Endothelial cell of umbilical vein (primary cell): ENCODE measurements at regions of chr15 and their contacts with region 1.

Region 1: GRCh38 chr15:71448688-71449114 is 333.4 kb downstream of the THSD4 start:
- DNase-seq: peak; percentile 87
- H3K4me3 ChIP-seq: no peak overlapping the region
- H3K27ac ChIP-seq: no peak overlapping the region
- H3K4me1 ChIP-seq: peaks cover 21% of the 10 kb centered on the region
- H3K27me3 ChIP-seq: no peaks in the 10 kb centered on the region
- CTCF ChIP-seq: peak; percentile 73 to 87
- POLR2A ChIP-seq: no peak

Region 2: DNA sequence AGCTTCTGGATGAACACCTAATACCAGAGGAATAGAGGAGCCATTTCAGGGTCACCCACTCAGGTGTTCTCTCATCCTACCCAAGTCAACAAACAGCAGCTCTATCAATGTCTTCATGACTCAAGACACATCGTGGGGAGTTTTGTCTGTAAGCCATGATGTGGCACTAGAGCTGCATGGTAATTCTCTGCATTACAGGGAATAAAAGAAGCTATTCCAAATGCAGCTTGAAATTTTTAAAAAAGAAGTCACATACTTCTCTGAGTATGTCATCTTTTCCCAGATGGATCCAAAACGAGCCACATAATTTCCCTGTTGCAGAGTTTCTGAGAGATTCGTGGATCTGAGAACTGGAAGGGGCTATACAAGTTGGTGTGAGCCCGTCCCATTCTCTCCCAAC is 339.6 kb before region 1 on chr15:
- CTCF ChIA-PET with region 1: interaction called, 33 read pairs
- POLR2A ChIA-PET with region 1: no interaction called
- dilution Hi-C with region 1: no loop called
- intact Hi-C with region 1: no loop called
- DNase-seq: no peak
- H3K4me3 ChIP-seq: no peak overlapping the region
- H3K27ac ChIP-seq: no peak overlapping the region
- H3K4me1 ChIP-seq: no peaks in the 10 kb centered on the region
- H3K27me3 ChIP-seq: no peaks in the 10 kb centered on the region
- CTCF ChIP-seq: no peak
- POLR2A ChIP-seq: no peak

Region 3: DNA sequence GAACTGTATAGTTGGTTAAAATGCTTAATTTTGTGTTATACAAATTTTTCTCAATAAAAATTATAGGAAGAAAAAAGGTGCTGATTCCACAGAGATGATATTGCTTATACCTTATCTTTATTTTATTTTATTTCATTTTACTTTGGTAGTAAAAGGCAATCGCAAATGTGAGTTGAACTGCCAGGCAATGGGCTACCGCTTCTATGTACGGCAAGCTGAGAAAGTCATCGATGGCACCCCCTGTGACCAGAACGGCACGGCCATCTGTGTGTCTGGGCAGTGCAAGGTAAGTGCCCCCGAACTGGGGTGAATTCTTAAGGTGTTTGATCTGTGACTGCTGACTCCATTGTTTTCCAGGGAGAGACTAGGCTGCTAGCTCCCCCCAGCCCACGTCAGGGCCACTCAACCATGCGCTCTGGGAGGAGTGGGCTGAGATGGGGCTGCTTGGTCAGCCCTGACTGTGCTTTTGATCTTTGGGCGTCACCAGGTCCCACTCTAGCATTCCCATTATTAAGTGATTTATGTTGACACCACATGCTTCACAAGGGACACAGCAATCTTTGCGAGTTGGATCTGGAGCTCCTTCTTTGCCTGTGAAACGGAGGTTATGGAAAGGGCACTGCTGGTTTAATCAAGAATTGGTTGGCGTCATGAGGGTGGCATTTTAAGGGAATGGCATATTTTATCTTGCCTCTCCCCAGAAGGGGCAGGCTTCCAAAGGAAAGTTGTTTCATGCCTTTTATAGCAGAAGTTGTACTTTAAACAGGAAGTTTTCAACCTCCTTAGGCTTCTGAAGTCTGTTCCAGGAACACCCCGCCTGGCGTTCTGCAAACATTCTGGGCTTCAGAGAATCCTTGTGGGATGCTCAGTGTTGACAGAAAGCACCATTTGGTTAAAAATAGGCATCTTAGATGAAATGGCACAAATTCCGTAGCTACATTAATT is 36.9 kb before region 1 on chr15:
- CTCF ChIA-PET with region 1: no interaction called
- POLR2A ChIA-PET with region 1: no interaction called
- dilution Hi-C with region 1: no loop called
- intact Hi-C with region 1: no loop called
- DNase-seq: peak; percentile 13
- H3K4me3 ChIP-seq: no peak overlapping the region
- H3K27ac ChIP-seq: no peak overlapping the region
- H3K4me1 ChIP-seq: peaks cover 3% of the 10 kb centered on the region
- H3K27me3 ChIP-seq: no peaks in the 10 kb centered on the region
- CTCF ChIP-seq: peak in 1 of 2 donors; percentile 1
- POLR2A ChIP-seq: no peak

Region 4: DNA sequence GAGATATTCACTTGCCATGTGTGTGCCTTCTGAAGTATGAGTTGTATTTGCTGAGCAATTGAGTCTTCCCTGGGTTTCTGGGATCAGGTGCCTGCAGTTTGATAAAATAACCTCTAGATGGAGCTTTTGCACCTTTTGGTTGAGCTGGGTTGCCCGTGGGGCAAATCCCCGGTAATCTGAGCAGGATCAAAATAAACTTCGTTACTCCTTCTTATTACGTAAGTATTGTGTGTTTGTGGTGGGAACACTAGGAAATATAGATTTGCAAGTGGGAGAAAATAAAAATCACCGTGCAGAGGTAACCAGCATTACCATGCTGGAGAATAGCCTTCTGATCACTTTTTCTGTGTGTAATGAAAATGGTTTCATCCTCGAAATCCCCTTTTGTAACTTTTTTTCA is 84.3 kb after region 1 on chr15:
- CTCF ChIA-PET with region 1: interaction called, 5 read pairs
- POLR2A ChIA-PET with region 1: no interaction called
- dilution Hi-C with region 1: no loop called
- intact Hi-C with region 1: loop called (anchors 2 kb)
- DNase-seq: no peak
- H3K4me3 ChIP-seq: no peak overlapping the region
- H3K27ac ChIP-seq: no peak overlapping the region
- H3K4me1 ChIP-seq: no peaks in the 10 kb centered on the region
- H3K27me3 ChIP-seq: peaks cover 0 to 2% of the 10 kb centered on the region in 2 experiments
- CTCF ChIP-seq: peak; percentile 37 to 57
- POLR2A ChIP-seq: no peak

Region 5: DNA sequence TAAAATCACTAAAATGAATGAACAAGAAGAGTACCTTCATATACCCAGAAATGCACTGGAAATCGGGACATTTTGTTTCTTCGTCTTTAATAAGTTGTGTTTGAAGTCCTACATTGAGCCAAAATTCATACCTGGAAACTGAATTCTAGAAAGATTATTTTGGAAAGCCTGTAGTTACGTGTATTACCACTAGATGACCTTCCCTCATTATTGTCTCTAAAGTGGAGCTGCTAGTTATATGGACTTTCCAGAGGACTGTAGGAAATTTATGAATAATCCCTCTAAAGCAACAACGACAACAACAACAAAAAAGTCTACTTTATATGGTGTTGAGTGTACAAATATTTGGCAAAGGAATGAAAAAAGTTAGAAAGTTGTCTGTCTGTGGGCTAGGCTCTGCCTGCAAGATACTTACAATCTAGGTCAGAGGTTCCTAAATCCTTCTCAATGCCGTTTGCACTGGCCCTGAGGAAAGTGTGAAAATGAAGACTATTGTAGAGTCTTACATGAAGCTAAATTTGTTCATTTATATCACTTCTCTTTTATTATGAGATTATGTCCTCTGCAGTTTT is 126.9 kb after region 1 on chr15:
- CTCF ChIA-PET with region 1: interaction called, 5 read pairs
- POLR2A ChIA-PET with region 1: no interaction called
- dilution Hi-C with region 1: no loop called
- intact Hi-C with region 1: loop called (anchors 2 kb)
- DNase-seq: peak; percentile 24
- H3K4me3 ChIP-seq: no peak overlapping the region
- H3K27ac ChIP-seq: no peak overlapping the region
- H3K4me1 ChIP-seq: peaks cover 12% of the 10 kb centered on the region
- H3K27me3 ChIP-seq: no peaks in the 10 kb centered on the region
- CTCF ChIP-seq: peak; percentile 25 to 36
- POLR2A ChIP-seq: no peak

Region 6: GRCh38 chr15:71651750-71652186 is 203.1 kb after region 1 on chr15:
- CTCF ChIA-PET with region 1: interaction called, 10 read pairs
- POLR2A ChIA-PET with region 1: no interaction called
- dilution Hi-C with region 1: no loop called
- intact Hi-C with region 1: loop called (anchors 1 kb)
- DNase-seq: peak; percentile 64
- H3K4me3 ChIP-seq: no peak overlapping the region
- H3K27ac ChIP-seq: no peak overlapping the region
- H3K4me1 ChIP-seq: peaks cover 15% of the 10 kb centered on the region
- H3K27me3 ChIP-seq: peaks cover 0 to 2% of the 10 kb centered on the region in 2 experiments
- CTCF ChIP-seq: peak; percentile 38 to 43
- POLR2A ChIP-seq: no peak